GM12878 (cell line): ENCODE measurements at regions of chr20 and their contacts with region 1.

Region 1: DNA sequence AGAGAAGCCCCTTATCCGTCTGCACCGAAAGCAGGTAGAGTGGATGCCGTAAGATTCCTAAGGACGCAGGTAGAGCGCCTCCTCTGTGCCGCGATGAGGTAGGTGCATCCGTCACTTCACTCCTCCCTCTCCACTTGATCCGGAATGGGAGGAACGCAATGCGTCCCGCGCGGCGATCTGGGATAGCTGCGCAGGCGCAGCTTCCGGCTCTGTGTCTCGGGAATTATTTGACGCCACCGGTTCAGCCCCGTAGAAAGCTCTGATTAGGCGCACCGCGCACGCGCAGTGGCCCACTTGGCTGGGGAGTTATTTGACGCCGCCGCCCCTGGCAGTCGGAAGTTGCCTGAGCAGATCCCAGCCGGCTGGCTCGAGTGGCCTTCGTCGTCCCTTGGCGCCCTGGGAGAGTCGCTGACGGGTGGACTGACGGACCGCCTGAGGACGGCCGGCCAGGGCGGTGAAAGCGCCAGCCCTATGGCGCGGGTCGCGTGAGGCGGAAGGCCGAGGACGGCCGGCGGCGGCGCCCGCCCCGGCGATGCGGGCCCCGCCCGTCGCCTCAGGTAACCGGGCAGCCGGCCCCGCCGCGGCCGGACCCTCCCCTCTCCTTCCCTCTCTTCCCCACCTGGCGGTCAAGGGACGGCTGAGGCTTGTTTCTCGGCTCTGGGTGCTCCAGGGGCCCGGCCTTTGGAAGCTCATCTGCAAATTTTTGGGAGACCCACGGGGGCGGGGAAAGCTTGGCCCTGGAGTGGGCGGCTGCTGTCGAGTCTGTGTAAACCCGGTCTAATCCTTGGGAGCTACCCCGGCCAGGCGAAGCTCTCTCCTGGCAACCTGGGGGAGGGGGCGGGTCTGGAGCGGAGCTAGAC is at the start of gene RALGAPB:
- DNase-seq: peak; percentile 98
- ATAC-seq: peak; percentile 94
- H3K4me3 ChIP-seq: peak within 1 kb of the TSS; percentile 94
- H3K27ac ChIP-seq: peak within 1 kb of the TSS; percentile 73
- H3K4me1 ChIP-seq: peaks cover 4% of the 10 kb centered on the region; the same call in 1 of the 2 replicates
- H3K27me3 ChIP-seq: no peaks in the 10 kb centered on the region
- CTCF ChIP-seq: peak; percentile 40 to 46 (median 46); a peak in 4 of 6 replicates
- EP300 ChIP-seq: no peak
- POLR2A ChIP-seq: peak; percentile 86
- RAD21 ChIP-seq: no peak
- polyA plus RNA-seq, gene RALGAPB: 3.7 to 4.2 TPM

Region 2: GRCh38 chr20:38434743-38435554 is 37.8 kb before region 1 on chr20 and contains the start of gene SNHG17:
- CTCF ChIA-PET with region 1: interaction called, 32 read pairs
- POLR2A ChIA-PET with region 1: interaction called, 5 read pairs
- RAD21 ChIA-PET with region 1: interaction called, 6 read pairs
- SMC1A ChIA-PET with region 1: interaction called, 11 read pairs
- in situ Hi-C with region 1: no loop called
- intact Hi-C with region 1: no loop called
- DNase-seq: peak; percentile 60
- ATAC-seq: peak; percentile 83
- H3K4me3 ChIP-seq: peak within 1 kb of the TSS; percentile 93
- H3K27ac ChIP-seq: peak within 1 kb of the TSS; percentile 77
- H3K4me1 ChIP-seq: peaks cover 7% of the 10 kb centered on the region
- H3K27me3 ChIP-seq: no peaks in the 10 kb centered on the region
- CTCF ChIP-seq: peak; percentile 100; a peak in 5 of 6 replicates
- EP300 ChIP-seq: no peak
- POLR2A ChIP-seq: peak; percentile 100
- RAD21 ChIP-seq: peak; percentile 24; the same call in 1 of the 2 replicates
- polyA plus RNA-seq, gene SNHG17: 25.6 to 33.9 TPM

Region 3: GRCh38 chr20:38446441-38447209 is 26.1 kb before region 1 on chr20:
- CTCF ChIA-PET with region 1: interaction called, 32 read pairs
- POLR2A ChIA-PET with region 1: interaction called, 9 read pairs
- RAD21 ChIA-PET with region 1: interaction called, 11 read pairs
- SMC1A ChIA-PET with region 1: interaction called, 6 read pairs
- in situ Hi-C with region 1: no loop called
- intact Hi-C with region 1: loop called (anchors 2 kb)
- DNase-seq: peak; percentile 56
- ATAC-seq: peak; percentile 95
- H3K4me3 ChIP-seq: peak overlapping the region; percentile 92
- H3K27ac ChIP-seq: peak overlapping the region; percentile 84
- H3K4me1 ChIP-seq: peaks cover 11% of the 10 kb centered on the region
- H3K27me3 ChIP-seq: no peaks in the 10 kb centered on the region
- CTCF ChIP-seq: peak; percentile 89 to 99 (median 90); a peak in 5 of 6 replicates
- EP300 ChIP-seq: 0 out of 4 replicates have a peak, but pooled peaks of 1 of the 2 experiments have one; percentile 37
- POLR2A ChIP-seq: peak; percentile 100
- RAD21 ChIP-seq: peak; percentile 35; the same call in 1 of the 2 replicates

Region 4: DNA sequence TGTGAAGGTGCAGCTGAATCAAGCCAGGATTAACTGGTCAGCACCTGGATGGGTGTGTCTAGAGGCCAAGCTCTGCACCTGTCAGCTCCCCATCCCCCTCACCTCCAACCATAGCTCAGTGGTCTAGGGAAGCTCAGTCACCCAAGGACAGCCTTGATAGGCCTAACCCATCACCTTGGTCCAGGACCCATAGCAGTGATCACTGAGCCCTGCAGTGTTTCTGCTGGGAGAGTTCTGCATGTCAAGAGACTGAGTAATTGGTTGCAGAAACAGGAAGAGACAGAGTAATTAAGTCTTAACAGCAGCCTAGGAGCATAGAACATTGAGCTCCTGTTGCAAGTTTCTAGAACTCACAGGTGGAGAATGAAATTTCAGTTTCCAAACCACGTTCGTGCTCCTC is 18.8 kb before region 1 on chr20:
- CTCF ChIA-PET with region 1: interaction called, 17 read pairs
- POLR2A ChIA-PET with region 1: interaction called, 9 read pairs
- RAD21 ChIA-PET with region 1: interaction called, 9 read pairs
- SMC1A ChIA-PET with region 1: interaction called, 5 read pairs
- in situ Hi-C with region 1: no loop called
- intact Hi-C with region 1: no loop called
- DNase-seq: peak; percentile 57
- ATAC-seq: peak; percentile 96
- H3K4me3 ChIP-seq: no peak overlapping the region
- H3K27ac ChIP-seq: no peak overlapping the region
- H3K4me1 ChIP-seq: peaks cover 16% of the 10 kb centered on the region
- H3K27me3 ChIP-seq: no peaks in the 10 kb centered on the region
- CTCF ChIP-seq: no peak
- EP300 ChIP-seq: no peak
- POLR2A ChIP-seq: no peak
- RAD21 ChIP-seq: no peak

Region 5: GRCh38 chr20:38485041-38485440 is 12.3 kb after region 1 on chr20:
- CTCF ChIA-PET with region 1: interaction called, 29 read pairs
- POLR2A ChIA-PET with region 1: no interaction called
- RAD21 ChIA-PET with region 1: no interaction called
- SMC1A ChIA-PET with region 1: interaction called, 6 read pairs
- in situ Hi-C with region 1: no loop called
- intact Hi-C with region 1: no loop called
- DNase-seq: no peak
- ATAC-seq: peak; percentile 22; the same call in 1 of the 3 replicates
- H3K4me3 ChIP-seq: no peak overlapping the region
- H3K27ac ChIP-seq: no peak overlapping the region
- H3K4me1 ChIP-seq: no peaks in the 10 kb centered on the region
- H3K27me3 ChIP-seq: no peaks in the 10 kb centered on the region
- CTCF ChIP-seq: no peak
- EP300 ChIP-seq: no peak
- POLR2A ChIP-seq: no peak
- RAD21 ChIP-seq: no peak

Region 6: GRCh38 chr20:38514185-38514584 is 41.4 kb after region 1 on chr20:
- CTCF ChIA-PET with region 1: no interaction called
- POLR2A ChIA-PET with region 1: no interaction called
- RAD21 ChIA-PET with region 1: no interaction called
- SMC1A ChIA-PET with region 1: no interaction called
- in situ Hi-C with region 1: no loop called
- intact Hi-C with region 1: no loop called
- DNase-seq: no peak
- ATAC-seq: no peak
- H3K4me3 ChIP-seq: no peak overlapping the region
- H3K27ac ChIP-seq: no peak overlapping the region
- H3K4me1 ChIP-seq: no peaks in the 10 kb centered on the region
- H3K27me3 ChIP-seq: no peaks in the 10 kb centered on the region
- CTCF ChIP-seq: no peak
- EP300 ChIP-seq: no peak
- POLR2A ChIP-seq: no peak
- RAD21 ChIP-seq: no peak